Heart right ventricle (tissue), 16 donors: ENCODE measurements at regions of chr6 and their contacts with region 1.

Region 1: DNA sequence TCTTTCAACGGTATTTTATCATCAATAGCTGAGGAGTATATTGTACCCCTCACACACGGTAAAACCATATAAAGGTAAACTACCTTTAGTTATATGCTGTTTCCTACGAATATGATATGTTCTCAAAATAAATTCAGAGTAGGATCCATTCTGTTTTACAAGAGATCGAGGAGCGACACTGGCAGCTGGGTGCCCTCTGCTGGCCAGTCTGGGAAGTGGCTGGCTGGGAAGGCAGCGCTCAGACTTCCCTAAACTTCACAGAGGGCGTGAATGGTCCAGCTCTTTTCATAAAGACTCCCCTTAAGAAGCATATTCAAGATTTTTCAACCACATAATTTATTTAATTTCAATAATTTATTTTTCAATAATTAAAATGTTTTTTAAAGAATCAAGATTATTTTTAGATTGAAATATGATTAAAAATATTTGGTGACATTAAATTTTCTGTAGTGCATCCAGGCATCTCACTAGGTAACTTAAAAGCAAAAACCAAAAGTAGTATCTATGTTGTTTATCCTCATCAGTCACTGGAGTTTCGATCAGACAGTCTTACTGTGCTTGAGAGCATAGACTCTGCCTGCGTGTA is 187.5 kb upstream of the PDE10A start:
- DNase-seq: peak; percentile 76 to 81
- ATAC-seq: peak; percentile 59 to 84 (median 78)
- H3K4me3 ChIP-seq: peak overlapping the region in 7 of 10 donors; percentile 8 to 37 (median 31)
- H3K27ac ChIP-seq: no peak overlapping the region
- H3K4me1 ChIP-seq: peaks cover 5 to 35% (median 18%) of the 10 kb centered on the region in 9 donors
- H3K27me3 ChIP-seq: peaks cover 10 to 72% (median 34%) of the 10 kb centered on the region in 7 donors
- CTCF ChIP-seq: peak; percentile 91 to 100 (median 99)

Region 2: DNA sequence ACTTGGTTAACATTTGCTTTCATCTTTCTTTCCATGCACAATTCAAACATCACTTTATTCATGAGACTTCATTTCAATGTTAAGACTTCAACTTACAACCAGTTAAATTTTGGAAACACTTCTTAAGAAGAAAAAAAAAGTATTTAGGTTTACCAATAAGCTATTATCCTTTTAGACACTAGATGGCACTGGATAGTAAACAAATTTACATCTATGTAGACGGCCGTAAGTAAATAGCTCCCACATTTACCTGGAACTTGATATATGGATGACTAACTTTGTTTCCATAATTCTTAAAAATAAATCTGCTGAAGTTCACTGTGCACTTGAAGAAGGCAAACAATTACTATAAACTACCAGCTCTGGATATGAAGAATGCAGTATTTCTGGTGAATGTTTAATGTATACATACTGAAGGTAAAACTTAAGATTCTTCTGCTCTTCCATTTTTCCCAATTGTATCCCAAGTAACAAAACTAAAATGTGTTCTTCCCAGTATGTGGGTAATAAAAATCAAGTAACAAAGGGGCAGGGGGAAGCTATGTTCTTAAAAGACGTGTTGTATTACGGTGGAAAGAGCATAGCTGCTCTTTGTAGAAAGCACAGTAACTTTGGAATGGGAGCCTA is 410.5 kb before region 1 on chr6:
- intact Hi-C with region 1: loop called (anchors 1 to 5 kb)
- DNase-seq: no peak
- ATAC-seq: peak in 3 of 8 donors; percentile 44 to 69 (median 62)
- H3K4me3 ChIP-seq: no peak overlapping the region
- H3K27ac ChIP-seq: no peak overlapping the region
- H3K4me1 ChIP-seq: no peaks in the 10 kb centered on the region
- H3K27me3 ChIP-seq: no peaks in the 10 kb centered on the region
- CTCF ChIP-seq: peak; percentile 34 to 81 (median 70)

Region 3: DNA sequence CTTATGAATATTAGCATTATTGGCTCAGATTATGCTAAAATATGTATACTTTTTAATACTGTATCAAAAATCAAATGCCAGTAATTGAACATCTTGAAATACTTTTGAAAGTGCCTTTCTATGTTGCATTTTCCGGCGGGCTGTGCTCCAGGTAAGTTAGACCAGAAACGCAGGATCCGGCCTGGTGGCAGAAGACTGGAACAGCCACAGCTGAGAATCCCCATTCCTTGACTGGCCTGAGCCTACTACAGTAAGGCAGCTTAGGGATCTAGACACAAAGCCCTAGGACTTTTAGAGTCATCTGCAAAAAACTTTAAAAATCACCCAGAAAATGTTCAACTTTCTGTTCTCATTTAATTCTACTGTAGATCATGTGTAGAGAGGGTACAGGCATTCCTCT is 402.3 kb before region 1 on chr6:
- intact Hi-C with region 1: loop called in 5 of 10 experiments (anchors 5 kb)
- DNase-seq: no peak
- ATAC-seq: no peak
- H3K4me3 ChIP-seq: no peak overlapping the region
- H3K27ac ChIP-seq: no peak overlapping the region
- H3K4me1 ChIP-seq: peaks cover 0 to 4% (median 0%) of the 10 kb centered on the region in 9 donors
- H3K27me3 ChIP-seq: no peaks in the 10 kb centered on the region
- CTCF ChIP-seq: no peak

Region 4: GRCh38 chr6:165729307-165729936 is 121.1 kb before region 1 on chr6:
- intact Hi-C with region 1: loop called (anchors 1 to 5 kb)
- DNase-seq: peak in 1 of 2 donors; percentile 55
- ATAC-seq: peak in 4 of 8 donors; percentile 46 to 65 (median 49)
- H3K4me3 ChIP-seq: no peak overlapping the region
- H3K27ac ChIP-seq: no peak overlapping the region
- H3K4me1 ChIP-seq: peaks cover 0 to 8% (median 0%) of the 10 kb centered on the region in 9 donors
- H3K27me3 ChIP-seq: no peaks in the 10 kb centered on the region
- CTCF ChIP-seq: peak; percentile 81 to 89 (median 87)

Region 5: GRCh38 chr6:165766457-165766856 is 84.1 kb before region 1 on chr6:
- intact Hi-C with region 1: loop called in 2 of 10 experiments (anchors 2 to 10 kb)
- DNase-seq: peak in 1 of 2 donors; percentile 24
- ATAC-seq: peak in 6 of 8 donors; percentile 50 to 89 (median 70)
- H3K4me3 ChIP-seq: no peak overlapping the region
- H3K27ac ChIP-seq: peak overlapping the region in 8 of 10 donors; percentile 15 to 81 (median 65)
- H3K4me1 ChIP-seq: peaks cover 0 to 51% (median 24%) of the 10 kb centered on the region in 9 donors
- H3K27me3 ChIP-seq: no peaks in the 10 kb centered on the region
- CTCF ChIP-seq: no peak